Left cardiac atrium (tissue), 4 donors: ENCODE measurements at regions of chr14 and their contacts with region 1.

Region 1: GRCh38 chr14:55026793-55027561 is at the starts of genes SOCS4 and WDHD1:
- DNase-seq: peak; percentile 96
- ATAC-seq: peak; percentile 99
- total RNA-seq, gene SOCS4: 16.9 to 24.9 TPM
- total RNA-seq, gene WDHD1: 2.6 TPM

Region 2: DNA sequence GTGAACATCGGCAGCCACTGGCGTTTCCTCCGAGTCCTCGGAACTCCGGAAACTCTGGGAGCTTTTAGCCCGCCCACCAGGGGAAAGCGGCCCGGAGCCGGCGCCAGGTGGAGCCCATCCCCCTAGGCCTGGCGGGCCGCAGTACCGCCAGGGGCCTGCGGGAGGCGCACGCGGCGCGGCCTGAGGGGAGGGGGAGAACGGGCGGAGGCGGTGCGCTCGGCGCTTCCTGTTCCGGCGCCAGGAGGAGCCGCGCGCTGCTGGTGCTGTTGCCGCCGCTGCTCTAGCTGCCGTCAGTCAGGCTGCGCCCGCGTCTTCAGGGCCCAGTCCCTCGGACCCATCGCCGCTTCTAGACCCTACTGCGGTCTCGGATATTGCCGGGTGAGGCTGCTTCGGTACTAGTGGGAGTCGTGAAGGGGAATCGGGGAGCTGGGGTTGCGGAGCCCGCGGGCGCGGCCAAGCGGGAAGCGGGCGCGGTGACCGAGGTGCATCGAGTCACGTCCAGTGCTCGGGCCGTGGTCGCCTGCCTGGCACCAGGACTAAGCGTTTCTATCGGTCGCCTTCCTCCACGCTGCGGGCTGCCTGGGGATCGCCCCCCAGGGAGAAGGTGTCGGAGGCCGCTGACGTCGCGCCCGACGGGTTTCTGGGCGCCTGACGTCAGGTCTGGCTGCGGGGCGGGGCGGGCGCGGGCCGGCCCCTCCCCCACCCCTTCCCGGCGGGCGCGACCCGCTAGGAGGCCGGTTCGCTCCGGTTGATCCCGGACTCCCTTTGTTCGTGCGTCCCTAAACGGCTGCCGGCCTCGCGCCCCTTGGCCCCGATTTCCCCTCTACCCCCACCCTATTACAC is 24.7 kb after region 1 on chr14 and contains the start of gene MAPK1IP1L:
- intact Hi-C with region 1: loop called in 1 of 2 experiments (anchors 1 kb)
- DNase-seq: peak; percentile 92
- ATAC-seq: peak; percentile 98
- total RNA-seq, gene MAPK1IP1L: 59.9 to 79.5 TPM